ENCODE measurements at regions of chr11 and their contacts with region 1.

Region 1: DNA sequence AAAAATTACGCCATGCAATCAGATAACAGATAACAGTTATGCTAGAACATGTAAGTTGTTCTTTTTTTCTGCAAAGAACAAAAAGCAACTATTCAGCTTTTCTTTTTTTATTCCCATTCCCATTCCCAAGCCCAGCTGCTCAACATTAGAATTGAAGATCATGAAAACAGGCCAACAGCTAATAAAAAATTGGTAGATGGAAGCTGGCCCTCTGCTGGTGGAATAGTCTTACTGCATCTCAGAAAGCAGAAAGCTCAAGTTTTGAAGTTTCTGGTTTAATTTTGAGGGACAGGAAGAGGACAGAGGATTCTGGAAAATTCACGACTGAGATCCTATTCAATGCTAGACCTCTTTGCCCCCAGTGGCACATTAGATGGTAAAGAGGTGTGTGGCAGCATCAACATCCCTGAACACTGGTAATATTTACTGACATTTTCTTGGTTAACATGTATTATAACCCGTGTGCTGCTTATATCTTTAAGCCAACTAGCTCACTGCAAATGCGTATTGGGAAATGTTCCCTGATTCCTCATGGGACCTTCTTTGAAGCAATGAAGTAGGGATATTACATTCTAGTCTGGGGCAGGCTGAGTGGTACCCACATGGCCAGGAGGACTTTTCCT is 591.2 kb downstream of the OPCML start:
- DNase-seq: no peak
- ATAC-seq: no peak
- H3K4me3 ChIP-seq: no peak overlapping the region
- H3K27ac ChIP-seq: no peak overlapping the region
- H3K4me1 ChIP-seq: no peaks in the 10 kb centered on the region
- H3K27me3 ChIP-seq: peaks cover 0 to 3% of the 10 kb centered on the region in 2 donors

Region 2: GRCh38 chr11:132960273-132961078 is 19.3 kb after region 1 on chr11:
- intact Hi-C with region 1: loop called in 1 of 2 experiments (anchors 2 kb)
- DNase-seq: no peak
- ATAC-seq: no peak
- H3K4me3 ChIP-seq: no peak overlapping the region
- H3K27ac ChIP-seq: no peak overlapping the region
- H3K4me1 ChIP-seq: no peaks in the 10 kb centered on the region
- H3K27me3 ChIP-seq: no peaks in the 10 kb centered on the region

Region 3: DNA sequence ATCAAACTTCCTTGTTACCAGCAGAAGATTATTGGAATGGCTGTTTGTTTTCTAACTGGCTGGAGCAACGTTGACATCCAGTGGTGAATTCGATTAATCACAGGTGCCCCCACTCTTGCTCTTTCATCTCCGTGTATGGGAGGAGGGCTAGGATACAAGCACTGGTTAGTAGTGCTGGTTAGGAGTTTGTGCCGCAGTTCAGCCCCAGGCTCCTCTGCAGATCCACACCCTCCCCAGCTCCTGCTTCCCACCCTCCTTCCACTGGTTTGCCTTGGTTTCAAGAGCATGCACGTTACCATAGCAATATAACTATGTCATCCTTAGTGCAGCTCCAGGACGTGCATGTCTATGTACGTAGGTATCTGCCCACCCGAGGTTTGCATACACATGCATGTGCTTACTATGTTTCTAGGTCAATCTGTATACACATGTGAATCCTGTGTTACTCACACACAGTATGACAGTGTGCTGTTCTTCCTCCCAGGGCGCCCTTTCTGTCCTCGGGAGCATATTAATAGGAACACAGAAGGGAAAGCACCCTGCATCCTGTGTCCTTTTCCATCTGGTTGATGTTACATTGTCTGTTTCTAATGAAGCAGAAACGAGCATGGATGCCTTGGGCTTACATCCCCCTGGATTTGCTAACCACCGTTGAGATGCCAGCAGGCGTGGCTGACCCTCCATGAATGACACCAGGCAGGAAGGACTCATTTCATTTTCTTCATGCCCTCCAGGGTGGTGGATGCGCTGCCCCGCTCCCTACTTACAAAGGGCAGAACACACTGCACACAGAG is 51.9 kb after region 1 on chr11:
- intact Hi-C with region 1: no loop called
- DNase-seq: no peak
- ATAC-seq: no peak
- H3K4me3 ChIP-seq: no peak overlapping the region
- H3K27ac ChIP-seq: no peak overlapping the region
- H3K4me1 ChIP-seq: no peaks in the 10 kb centered on the region
- H3K27me3 ChIP-seq: no peaks in the 10 kb centered on the region

Measured in aorta (tissue), 5 donors.